ENCODE measurements at regions of chr3 and their contacts with region 1.

Region 1: DNA sequence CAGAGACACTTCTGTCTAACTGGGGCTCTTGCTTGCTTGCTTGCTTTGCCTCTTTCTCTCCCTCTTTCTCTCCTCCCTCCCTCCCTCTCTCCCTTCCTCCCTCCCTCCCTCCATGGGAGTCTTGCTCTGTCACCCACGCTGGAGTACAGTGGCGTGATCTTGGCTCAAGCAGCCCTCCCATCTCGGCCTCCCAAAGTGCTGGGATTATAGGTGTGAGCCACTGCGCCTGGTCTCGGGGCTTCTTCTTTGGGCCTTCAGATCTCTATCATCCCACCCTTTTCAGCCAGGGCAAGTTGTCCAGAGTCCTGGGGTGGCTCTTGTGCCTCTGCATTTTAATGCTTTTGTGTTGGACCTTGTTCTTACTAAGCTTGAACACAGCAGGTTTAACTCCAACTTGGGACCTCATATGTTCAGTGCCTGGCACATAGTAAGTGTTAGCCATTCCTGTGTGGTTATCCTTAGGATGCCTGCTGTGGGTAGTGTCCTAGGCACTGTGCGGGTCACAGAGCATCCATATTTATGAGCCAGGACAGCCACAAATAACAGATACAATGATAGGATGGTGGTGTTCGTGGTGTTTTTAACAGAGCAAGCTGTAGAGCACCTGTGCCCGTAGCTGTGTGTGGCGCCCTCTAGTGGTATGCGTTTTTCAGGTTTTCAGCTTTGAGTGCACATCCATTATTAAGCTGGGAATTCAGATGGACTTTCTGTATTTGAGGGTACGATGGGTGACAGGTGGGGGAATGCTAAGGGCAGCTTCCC is 75.1 kb downstream of the CCK start:
- DNase-seq: no peak
- H3K4me3 ChIP-seq: no peak overlapping the region
- CTCF ChIP-seq: peak; percentile 75

Region 2: GRCh38 chr3:42118762-42119361 is 72.0 kb before region 1 on chr3:
- CTCF ChIA-PET with region 1: interaction called, 38 read pairs
- POLR2A ChIA-PET with region 1: no interaction called
- DNase-seq: no peak
- H3K4me3 ChIP-seq: no peak overlapping the region
- CTCF ChIP-seq: peak; percentile 36

Region 3: GRCh38 chr3:42161050-42161935 is 29.6 kb before region 1 on chr3:
- CTCF ChIA-PET with region 1: interaction called, 10 read pairs
- POLR2A ChIA-PET with region 1: no interaction called
- DNase-seq: no peak
- H3K4me3 ChIP-seq: no peak overlapping the region
- CTCF ChIP-seq: no peak

Region 4: DNA sequence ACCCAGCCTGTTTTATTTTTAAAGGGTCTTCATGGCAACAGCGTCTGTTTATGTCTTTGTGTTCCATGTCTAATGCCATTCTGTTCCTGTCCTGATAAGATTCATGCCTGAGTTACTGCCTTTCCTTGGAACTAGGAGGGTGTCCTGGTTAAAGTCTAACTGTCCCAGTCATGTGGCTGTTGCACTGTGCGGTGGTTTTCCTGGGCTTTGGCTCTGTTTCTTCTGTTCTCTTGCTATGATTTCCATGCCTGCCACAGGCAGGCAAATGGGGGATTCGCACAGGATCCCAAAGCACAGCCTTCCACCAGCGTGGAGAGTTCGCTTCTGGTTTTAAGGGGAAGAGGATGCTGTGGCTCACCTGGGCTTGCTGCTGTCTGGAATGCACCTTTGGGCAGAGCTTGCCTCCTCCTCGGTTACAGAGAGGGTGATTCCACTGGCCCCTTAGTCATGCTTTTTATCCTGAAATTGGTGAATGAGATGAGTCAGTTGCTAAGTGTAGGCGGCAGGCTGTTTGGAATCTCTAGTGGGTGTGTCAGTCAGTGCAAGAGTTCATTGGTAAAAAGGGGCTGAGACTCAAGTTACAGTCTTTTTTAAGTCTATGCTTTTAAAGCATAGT is 11.7 kb before region 1 on chr3:
- CTCF ChIA-PET with region 1: interaction called, 94 read pairs
- POLR2A ChIA-PET with region 1: no interaction called
- DNase-seq: peak; percentile 67
- H3K4me3 ChIP-seq: no peak overlapping the region
- CTCF ChIP-seq: no peak

Region 5: DNA sequence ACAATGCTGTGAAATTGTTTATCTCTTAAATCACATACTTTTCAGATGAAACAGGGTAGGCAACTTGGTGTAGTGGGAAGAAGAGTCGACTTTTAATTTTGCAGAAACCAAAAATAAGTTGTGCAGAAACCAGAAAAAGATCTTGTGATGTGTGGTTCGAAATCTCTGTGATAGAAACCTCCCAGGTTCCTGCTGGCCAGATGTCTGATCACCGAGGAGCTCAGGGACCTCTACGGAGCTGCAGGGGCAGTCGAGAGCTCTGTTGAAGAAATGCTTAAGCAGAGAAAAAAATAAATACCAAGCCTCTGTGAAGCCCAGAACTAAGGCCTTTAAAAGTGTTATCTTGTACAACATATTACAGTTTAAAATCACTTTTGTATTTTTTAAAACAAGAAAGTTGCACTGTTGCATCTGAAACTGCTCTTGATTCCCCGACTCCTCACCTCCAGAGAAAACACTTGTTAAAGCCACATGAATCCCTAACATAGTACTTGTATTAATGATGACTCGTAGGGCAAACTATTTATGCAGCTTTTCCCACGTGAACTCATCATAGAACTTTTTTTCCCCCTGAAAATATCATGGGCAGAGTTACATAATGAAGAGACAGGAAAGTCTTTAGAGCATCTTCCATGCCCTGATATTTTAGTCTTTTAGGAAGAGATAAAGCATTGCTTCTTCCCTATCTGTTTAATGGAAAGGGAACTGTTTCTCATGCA is 23.8 kb after region 1 on chr3:
- CTCF ChIA-PET with region 1: interaction called, 26 read pairs
- POLR2A ChIA-PET with region 1: no interaction called
- DNase-seq: no peak
- H3K4me3 ChIP-seq: no peak overlapping the region
- CTCF ChIP-seq: no peak

Region 6: DNA sequence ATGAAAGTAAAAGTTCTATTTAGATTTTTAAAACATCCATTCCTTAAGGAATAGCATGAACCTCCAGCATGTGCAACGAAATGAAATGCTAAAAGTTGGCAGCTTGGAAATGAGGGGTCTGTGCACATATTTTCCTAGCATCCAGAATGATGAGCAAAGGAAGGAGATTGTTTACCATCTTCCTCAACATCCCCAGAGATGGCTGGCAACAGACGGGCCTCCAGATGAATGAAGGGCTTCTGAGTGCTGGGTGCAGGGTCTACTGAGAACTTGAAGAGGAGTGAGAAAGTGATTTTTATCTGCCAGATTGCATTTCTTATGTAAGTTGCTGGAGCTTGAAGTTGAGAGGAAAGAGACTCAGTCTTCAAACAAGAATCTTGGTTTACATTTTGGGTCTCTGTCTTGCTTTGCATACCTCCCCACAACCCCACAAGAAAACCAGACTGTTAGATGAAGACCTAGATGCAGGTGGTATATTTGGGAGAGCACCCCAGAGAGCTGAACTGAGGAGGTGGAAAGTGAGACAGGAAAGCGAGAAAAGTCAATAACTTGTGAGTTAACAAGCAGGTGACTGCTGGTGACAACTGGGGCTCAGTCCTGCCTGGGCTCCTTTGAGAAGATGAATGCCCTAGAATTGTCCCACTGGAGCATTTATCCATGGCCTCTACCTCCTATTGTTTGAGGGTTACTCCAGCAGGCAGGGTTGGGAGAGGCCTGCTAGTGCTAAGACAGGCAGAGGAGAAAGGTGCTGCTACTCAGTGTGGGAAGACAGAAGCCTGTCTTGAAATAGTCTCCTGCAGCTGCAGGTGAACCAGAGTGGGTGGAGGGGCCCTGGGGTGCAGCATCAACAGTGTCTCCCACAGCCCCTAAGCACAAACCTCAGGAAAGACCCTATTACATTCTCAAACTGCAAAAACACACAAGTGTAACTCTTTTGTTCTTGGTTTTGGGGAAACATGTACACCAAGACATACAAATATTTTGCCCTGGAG is 85.6 kb after region 1 on chr3:
- CTCF ChIA-PET with region 1: no interaction called
- POLR2A ChIA-PET with region 1: no interaction called
- DNase-seq: no peak
- H3K4me3 ChIP-seq: no peak overlapping the region
- CTCF ChIP-seq: no peak

Measured in AG04449 (cell line).